ENCODE measurements at regions of chr16 and their contacts with region 1.

Region 1: DNA sequence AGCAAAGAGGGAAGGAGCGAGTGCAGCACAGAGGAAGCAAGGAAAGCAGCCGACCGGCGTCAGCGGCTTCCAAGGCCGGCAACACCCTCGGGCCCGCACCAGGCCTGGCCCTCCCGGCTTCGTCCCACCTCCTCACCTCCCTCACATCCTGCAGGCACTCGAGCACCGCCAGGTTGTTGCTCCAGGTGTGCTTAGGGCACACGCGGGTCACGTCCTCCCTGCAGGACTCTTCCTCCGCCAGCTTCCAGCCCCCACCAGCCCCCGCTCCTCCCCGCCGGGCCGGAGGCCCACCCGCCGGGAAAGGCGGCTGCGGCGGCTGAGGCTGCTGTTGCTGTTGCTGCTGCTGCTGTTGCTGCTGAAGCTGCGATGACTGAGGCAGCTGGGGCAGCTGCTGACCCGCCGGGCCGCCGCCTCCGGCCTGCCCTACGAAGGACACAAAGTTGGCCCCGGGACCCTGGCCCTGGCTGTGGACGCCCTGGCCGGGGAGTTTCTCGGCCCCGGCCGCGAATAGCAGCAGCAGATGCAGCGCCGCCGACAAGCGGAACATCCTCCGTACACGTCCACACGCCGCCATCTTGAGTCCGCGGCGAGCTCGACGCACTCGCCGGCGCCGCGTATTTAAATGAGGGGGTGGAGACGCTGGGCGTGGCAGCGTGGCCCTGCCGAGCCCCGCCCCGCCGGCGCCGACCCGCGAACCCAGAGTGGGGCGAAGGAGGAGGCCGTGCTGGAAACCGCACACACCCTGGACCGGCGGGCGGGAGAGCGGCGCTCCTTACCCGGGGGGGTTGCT is at the start of gene GLG1:
- DNase-seq: peak; percentile 90
- H3K4me3 Mint-ChIP-seq: peak within 1 kb of the TSS; percentile 89
- H3K27ac Mint-ChIP-seq: peak within 1 kb of the TSS; percentile 80
- H3K4me1 Mint-ChIP-seq: peaks cover 19% of the 10 kb centered on the region
- H3K27me3 Mint-ChIP-seq: no peaks in the 10 kb centered on the region
- CTCF ChIP-seq: no peak
- total RNA-seq, gene GLG1: 99.1 and 132 TPM in 2 replicates

Region 2: DNA sequence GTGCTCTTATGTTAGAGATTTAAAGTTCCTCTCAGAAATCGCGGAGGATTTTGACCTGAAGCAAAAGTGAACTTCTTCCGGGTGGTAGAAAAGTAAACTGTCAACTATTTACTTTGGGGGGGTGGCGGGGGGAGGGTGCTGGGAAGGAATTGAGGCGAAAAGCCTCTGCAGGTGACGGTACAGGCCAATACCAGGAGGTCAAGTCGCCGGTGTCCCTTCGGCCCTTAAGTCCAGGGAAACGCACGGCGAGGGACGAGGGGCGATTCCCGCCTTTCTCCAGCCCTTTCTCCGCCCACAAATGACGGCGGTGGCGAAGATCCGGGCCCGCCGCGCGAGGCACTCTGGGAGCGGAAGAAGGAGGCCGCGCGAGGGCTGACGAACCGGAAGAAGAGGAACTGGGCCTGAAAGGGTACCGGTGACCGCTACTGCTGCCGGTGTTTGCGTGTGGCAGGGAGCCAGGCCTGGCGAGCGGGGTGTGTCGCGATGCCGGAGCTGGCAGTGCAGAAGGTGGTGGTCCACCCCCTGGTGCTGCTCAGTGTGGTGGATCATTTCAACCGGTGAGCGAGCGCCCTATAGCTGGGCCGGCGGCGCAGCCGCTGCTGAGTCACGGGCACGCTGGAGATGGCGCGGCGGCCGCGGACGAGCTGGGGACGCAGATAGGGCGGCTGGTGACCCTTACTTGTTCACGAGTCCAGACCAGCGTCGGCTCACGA is 310.1 kb before region 1 on chr16 and contains the start of gene PSMD7:
- CTCF ChIA-PET with region 1: no interaction called
- POLR2A ChIA-PET with region 1: interaction called, 13 read pairs
- intact Hi-C with region 1: no loop called
- DNase-seq: peak; percentile 92
- H3K4me3 Mint-ChIP-seq: peak within 1 kb of the TSS; percentile 84
- H3K27ac Mint-ChIP-seq: peak within 1 kb of the TSS; percentile 98
- H3K4me1 Mint-ChIP-seq: peaks cover 7% of the 10 kb centered on the region
- H3K27me3 Mint-ChIP-seq: no peaks in the 10 kb centered on the region
- CTCF ChIP-seq: no peak
- total RNA-seq, gene PSMD7: 141 and 172 TPM in 2 replicates

Region 3: DNA sequence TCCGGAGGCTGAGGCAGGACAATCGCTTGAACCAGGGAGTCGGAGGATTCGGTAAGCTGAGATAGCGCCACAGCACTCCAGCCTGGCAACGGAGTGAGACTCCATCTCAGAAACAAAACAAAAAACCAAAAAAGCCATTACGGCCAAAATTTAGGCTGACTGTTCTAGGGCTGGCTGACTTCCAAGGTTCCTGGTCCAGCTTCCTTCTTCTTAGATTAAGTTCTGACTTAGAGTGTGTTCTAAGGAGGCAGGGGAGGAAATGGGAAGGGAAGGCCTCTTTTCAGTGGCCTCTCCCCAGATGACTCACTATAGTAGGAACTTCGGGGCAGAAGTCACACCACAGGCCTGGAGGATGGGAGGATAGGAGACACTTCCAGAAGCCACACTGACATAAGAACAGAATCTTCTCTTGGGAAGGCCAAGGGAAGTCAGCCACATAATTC is 157.7 kb before region 1 on chr16:
- CTCF ChIA-PET with region 1: interaction called, 6 read pairs
- POLR2A ChIA-PET with region 1: interaction called, 23 read pairs
- intact Hi-C with region 1: loop called (anchors 2 kb)
- DNase-seq: peak; percentile 93
- H3K4me3 Mint-ChIP-seq: peak overlapping the region; percentile 31
- H3K27ac Mint-ChIP-seq: peak overlapping the region; percentile 86
- H3K4me1 Mint-ChIP-seq: peaks cover 15% of the 10 kb centered on the region
- H3K27me3 Mint-ChIP-seq: no peaks in the 10 kb centered on the region
- CTCF ChIP-seq: no peak

Region 4: DNA sequence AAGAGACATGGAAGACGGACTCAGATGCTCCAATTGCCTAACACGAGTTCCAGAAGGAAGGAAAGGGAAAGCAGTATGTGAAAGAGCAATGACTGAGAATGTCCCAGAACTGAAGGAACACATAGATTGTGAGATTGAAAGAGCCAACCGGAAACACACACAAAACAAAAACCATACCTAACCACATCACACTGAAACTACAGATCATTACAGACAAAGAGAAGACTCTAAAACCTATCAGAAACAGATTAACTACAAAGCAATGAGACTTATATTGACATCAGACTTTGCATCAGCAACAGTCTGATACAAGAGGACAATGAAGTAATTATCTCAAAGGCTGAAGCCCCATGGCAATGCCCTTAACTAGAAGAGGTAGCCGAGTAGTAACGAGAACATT is 139.8 kb before region 1 on chr16:
- CTCF ChIA-PET with region 1: no interaction called
- POLR2A ChIA-PET with region 1: interaction called, 11 read pairs
- intact Hi-C with region 1: no loop called
- DNase-seq: no peak
- H3K4me3 Mint-ChIP-seq: no peak overlapping the region
- H3K27ac Mint-ChIP-seq: no peak overlapping the region
- H3K4me1 Mint-ChIP-seq: peaks cover 13% of the 10 kb centered on the region
- H3K27me3 Mint-ChIP-seq: no peaks in the 10 kb centered on the region
- CTCF ChIP-seq: no peak

Region 5: DNA sequence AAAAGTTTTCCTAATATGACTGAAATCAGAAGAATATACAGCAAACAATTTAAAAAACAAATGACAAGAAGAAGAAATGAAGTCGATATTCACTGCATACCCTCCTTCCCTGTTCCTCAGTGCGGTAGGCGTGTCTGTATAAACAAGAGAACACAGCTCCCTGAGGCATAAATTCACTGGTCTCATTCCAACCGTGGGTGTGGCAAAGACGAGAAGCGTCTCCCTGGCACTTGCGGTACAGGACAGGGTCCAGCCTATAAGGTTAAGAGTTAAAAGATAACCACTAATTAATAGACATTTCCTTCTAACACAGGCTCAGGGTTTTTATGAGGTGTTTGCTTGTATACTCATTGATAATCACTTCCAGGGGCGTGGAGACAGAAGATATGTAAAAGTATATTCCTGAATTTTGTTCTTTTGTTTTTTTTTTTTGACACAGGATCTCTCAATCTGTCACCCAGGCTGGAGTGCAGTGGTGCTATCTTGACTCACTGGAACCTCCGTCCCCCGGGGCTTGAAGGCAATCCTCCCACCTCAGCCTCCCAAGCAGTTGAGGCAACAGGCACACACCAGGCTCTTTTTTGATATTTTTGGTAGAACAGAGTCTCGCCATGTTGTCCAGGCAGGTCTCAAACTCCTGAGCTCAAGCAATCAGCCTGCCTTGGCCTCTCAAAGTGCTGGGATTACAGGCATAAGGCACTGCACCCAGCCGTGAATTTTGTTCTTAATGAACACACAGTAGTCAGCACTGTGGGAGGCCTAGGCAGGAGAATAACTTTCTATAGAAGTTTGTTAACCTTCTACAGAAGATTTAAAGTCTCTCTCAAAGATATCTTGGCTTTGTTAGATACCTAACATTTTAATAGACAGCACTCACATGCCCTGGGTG is 126.3 kb before region 1 on chr16:
- CTCF ChIA-PET with region 1: interaction called, 3 read pairs
- POLR2A ChIA-PET with region 1: interaction called, 12 read pairs
- intact Hi-C with region 1: loop called (anchors 2 kb)
- DNase-seq: peak; percentile 91
- H3K4me3 Mint-ChIP-seq: peak overlapping the region; percentile 57
- H3K27ac Mint-ChIP-seq: peak overlapping the region; percentile 92
- H3K4me1 Mint-ChIP-seq: peaks cover 28% of the 10 kb centered on the region
- H3K27me3 Mint-ChIP-seq: no peaks in the 10 kb centered on the region
- CTCF ChIP-seq: no peak

Region 6: GRCh38 chr16:74565378-74565777 is 41.3 kb before region 1 on chr16:
- CTCF ChIA-PET with region 1: no interaction called
- POLR2A ChIA-PET with region 1: interaction called, 12 read pairs
- intact Hi-C with region 1: no loop called
- DNase-seq: no peak
- H3K4me3 Mint-ChIP-seq: no peak overlapping the region
- H3K27ac Mint-ChIP-seq: no peak overlapping the region
- H3K4me1 Mint-ChIP-seq: peaks cover 16% of the 10 kb centered on the region
- H3K27me3 Mint-ChIP-seq: no peaks in the 10 kb centered on the region
- CTCF ChIP-seq: no peak

Region 7: GRCh38 chr16:74577882-74578366 is 28.8 kb before region 1 on chr16:
- CTCF ChIA-PET with region 1: interaction called, 8 read pairs
- POLR2A ChIA-PET with region 1: interaction called, 14 read pairs
- intact Hi-C with region 1: no loop called
- DNase-seq: peak; percentile 52
- H3K4me3 Mint-ChIP-seq: no peak overlapping the region
- H3K27ac Mint-ChIP-seq: peak overlapping the region; percentile 25
- H3K4me1 Mint-ChIP-seq: peaks cover 15% of the 10 kb centered on the region
- H3K27me3 Mint-ChIP-seq: no peaks in the 10 kb centered on the region
- CTCF ChIP-seq: no peak

Region 8: GRCh38 chr16:74679983-74680382 is 73.3 kb after region 1 on chr16:
- CTCF ChIA-PET with region 1: no interaction called
- POLR2A ChIA-PET with region 1: no interaction called
- intact Hi-C with region 1: no loop called
- DNase-seq: no peak
- H3K4me3 Mint-ChIP-seq: no peak overlapping the region
- H3K27ac Mint-ChIP-seq: no peak overlapping the region
- H3K4me1 Mint-ChIP-seq: no peaks in the 10 kb centered on the region
- H3K27me3 Mint-ChIP-seq: no peaks in the 10 kb centered on the region
- CTCF ChIP-seq: no peak